Heart right ventricle (tissue), 16 donors: ENCODE measurements at regions of chr1 and their contacts with region 1.

Region 1: GRCh38 chr1:151340870-151341754 is 5.9 kb downstream of the RFX5 start:
- DNase-seq: peak in 1 of 2 donors; percentile 64
- ATAC-seq: peak; percentile 79 to 93 (median 88)
- H3K4me3 ChIP-seq: no peak overlapping the region
- H3K27ac ChIP-seq: peak overlapping the region in 2 of 10 donors; percentile 9 to 29
- H3K4me1 ChIP-seq: peaks cover 0 to 26% (median 7%) of the 10 kb centered on the region in 9 donors
- H3K27me3 ChIP-seq: no peaks in the 10 kb centered on the region
- CTCF ChIP-seq: peak; percentile 47 to 80 (median 75)

Region 2: DNA sequence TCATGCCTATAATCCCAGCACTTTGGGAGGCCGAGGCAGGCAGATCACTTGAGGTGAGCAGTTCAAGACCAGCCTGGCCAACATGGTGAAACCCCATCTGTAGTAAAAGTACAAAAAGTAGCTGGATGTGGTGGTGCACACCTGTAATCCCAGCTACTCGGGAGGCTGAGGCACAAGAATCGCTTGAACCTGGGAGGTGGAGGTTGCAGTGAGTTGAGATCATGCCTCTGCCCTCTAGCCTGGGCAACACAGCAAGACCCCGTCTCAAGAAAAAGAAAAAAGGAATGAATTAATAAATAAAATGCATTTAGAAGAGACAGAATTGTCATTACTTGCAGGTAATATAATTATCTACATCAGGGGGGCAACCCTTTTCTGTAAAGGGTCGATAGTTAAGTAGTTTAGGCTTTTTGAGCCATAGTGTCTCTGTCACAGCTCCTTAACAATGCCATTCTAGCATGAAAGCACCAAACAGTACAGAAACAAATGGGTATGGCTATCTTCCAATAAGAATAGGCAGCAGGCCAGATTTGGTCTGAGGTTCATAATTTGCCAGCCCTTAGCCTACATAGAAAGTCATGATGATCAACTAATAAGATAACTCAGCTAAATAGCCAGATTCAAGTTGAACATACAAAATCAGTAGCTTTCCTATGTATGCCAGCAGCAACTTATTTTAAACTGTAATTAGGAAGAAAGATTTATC is 920.4 kb before region 1 on chr1:
- intact Hi-C with region 1: no loop called
- DNase-seq: no peak
- ATAC-seq: no peak
- H3K4me3 ChIP-seq: no peak overlapping the region
- H3K27ac ChIP-seq: no peak overlapping the region
- H3K4me1 ChIP-seq: peaks cover 0 to 13% (median 8%) of the 10 kb centered on the region in 9 donors
- H3K27me3 ChIP-seq: no peaks in the 10 kb centered on the region
- CTCF ChIP-seq: no peak

Region 3: GRCh38 chr1:151106894-151107293 is 234.2 kb before region 1 on chr1:
- intact Hi-C with region 1: no loop called
- DNase-seq: no peak
- ATAC-seq: no peak
- H3K4me3 ChIP-seq: no peak overlapping the region
- H3K27ac ChIP-seq: no peak overlapping the region
- H3K4me1 ChIP-seq: no peaks in the 10 kb centered on the region
- H3K27me3 ChIP-seq: no peaks in the 10 kb centered on the region
- CTCF ChIP-seq: no peak

Region 4: GRCh38 chr1:151254217-151255213 is 86.6 kb before region 1 on chr1 and contains the start of gene PSMD4:
- intact Hi-C with region 1: no loop called
- DNase-seq: peak; percentile 92 to 96
- ATAC-seq: peak; percentile 97 to 99 (median 99)
- H3K4me3 ChIP-seq: peak within 1 kb of the TSS; percentile 71 to 98 (median 92)
- H3K27ac ChIP-seq: peak within 1 kb of the TSS; percentile 37 to 98 (median 90)
- H3K4me1 ChIP-seq: peaks cover 4 to 31% (median 16%) of the 10 kb centered on the region in 9 donors
- H3K27me3 ChIP-seq: no peaks in the 10 kb centered on the region
- CTCF ChIP-seq: peak in 1 of 9 donors; percentile 17
- total RNA-seq, gene PSMD4: 119 to 157 (median 147) TPM

Region 5: DNA sequence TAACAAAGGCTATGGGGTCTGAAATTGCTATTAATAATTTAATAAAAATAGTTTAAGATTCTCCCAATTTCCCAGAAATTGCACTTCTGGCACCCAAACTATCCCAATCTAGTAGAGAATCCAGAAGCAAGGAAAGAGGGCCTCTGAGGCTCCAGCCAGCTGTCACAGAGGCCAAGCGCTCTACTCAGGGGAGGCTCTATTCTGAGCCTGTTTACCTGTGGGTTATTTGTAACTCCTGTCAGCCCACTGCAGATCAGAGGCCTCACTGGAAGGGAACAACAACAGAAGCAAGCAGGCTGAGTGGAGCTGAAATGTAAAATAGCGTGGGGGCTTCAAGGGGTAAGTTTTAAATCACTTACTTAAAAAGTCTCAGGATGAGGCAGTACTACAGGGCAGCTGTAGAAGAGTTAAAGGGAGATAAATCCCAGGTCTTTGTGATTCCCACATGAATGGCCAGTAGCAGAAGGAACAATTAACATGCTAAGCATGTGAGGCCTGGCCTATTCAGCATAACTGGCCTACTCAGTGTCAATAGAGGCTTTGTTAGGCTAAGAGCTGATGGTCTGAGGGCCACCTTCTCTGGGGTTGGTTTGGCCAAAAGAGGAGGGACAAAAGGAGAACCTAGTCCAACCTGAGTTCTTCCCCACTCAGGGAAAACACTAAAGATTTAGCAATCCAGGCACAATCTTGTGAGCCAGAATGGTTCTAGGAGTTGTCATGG is 46.2 kb before region 1 on chr1:
- intact Hi-C with region 1: loop called in 5 of 10 experiments (anchors 2 to 5 kb)
- DNase-seq: no peak
- ATAC-seq: no peak
- H3K4me3 ChIP-seq: no peak overlapping the region
- H3K27ac ChIP-seq: no peak overlapping the region
- H3K4me1 ChIP-seq: peaks cover 0 to 1% (median 0%) of the 10 kb centered on the region in 9 donors
- H3K27me3 ChIP-seq: no peaks in the 10 kb centered on the region
- CTCF ChIP-seq: no peak

Region 6: GRCh38 chr1:151311589-151312331 is 29.4 kb before region 1 on chr1:
- intact Hi-C with region 1: loop called in 1 of 10 experiments (anchors 5 kb)
- DNase-seq: peak; percentile 33 to 74
- ATAC-seq: peak; percentile 75 to 95 (median 86)
- H3K4me3 ChIP-seq: no peak overlapping the region
- H3K27ac ChIP-seq: peak overlapping the region in 9 of 10 donors; percentile 58 to 91 (median 71)
- H3K4me1 ChIP-seq: peaks cover 38 to 82% (median 67%) of the 10 kb centered on the region in 9 donors
- H3K27me3 ChIP-seq: no peaks in the 10 kb centered on the region
- CTCF ChIP-seq: no peak